Adrenal gland (tissue), 19 donors: ENCODE measurements at regions of chr3 and their contacts with region 1.

Region 1: DNA sequence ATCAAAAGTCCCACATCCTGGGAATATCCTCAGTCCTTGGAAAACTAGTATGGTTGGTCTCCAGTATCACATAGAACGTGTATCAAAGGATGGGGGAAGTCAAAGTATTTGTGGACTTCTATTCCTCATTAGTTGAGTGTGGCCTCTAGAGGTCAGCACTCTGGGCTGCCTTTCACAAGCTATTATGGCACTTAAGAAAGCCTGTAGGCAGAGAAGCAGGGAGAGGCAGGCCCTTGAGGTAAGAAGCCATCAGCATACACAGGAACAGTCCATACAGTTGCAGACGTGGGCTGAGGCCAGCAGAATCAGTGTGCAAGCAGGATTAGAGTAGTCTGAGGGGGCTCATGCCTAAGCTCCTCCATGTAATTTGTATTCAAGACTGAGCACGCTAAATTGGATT is 341.7 kb downstream of the CLSTN2 start:
- DNase-seq: peak in 4 of 7 donors; percentile 25 to 54 (median 36)
- H3K4me3 ChIP-seq: no peak overlapping the region
- H3K27ac ChIP-seq: no peak overlapping the region
- H3K4me1 ChIP-seq: no peaks in the 10 kb centered on the region
- H3K27me3 ChIP-seq: no peaks in the 10 kb centered on the region
- CTCF ChIP-seq: peak in 5 of 6 experiments; percentile 19 to 42 (median 34)
- POLR2A ChIP-seq: no peak

Region 2: DNA sequence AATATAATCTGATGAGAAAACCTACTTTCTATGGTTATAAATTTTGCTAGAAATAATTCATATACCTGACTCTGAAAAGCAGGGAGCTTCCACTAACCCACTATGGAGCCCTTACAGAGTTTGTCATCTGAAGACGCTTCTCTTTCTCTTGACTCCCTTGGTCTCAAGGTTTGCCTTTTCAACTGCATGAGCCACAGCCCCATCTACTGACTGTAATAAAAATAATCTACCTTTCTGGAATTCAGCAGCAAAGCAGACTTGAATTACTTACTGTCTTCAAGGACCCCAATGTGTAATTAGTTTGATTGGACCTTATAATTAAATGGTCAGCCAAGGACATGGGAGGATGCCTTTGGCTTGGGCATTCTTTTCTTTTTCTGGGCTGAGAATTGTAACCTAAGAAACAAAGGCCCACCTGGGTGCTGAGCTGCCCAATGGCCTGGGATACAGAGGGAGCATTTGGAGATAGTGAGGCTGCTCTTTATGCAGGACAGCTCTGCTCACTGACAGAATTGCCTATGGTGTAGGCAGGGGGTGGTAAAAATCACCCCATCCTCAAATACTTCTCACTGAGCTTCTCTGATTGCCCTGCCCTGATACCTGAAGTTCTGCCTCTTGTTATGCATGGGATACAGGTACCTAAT is 222.5 kb after region 1 on chr3:
- intact Hi-C with region 1: loop called in 1 of 2 experiments (anchors 10 kb)
- DNase-seq: peak in 4 of 7 donors; percentile 16 to 33 (median 30)
- H3K4me3 ChIP-seq: no peak overlapping the region
- H3K27ac ChIP-seq: no peak overlapping the region
- H3K4me1 ChIP-seq: no peaks in the 10 kb centered on the region
- H3K27me3 ChIP-seq: no peaks in the 10 kb centered on the region
- CTCF ChIP-seq: peak; percentile 37 to 65 (median 63)
- POLR2A ChIP-seq: no peak